H1 (cell line): ENCODE measurements at regions of chr1 and their contacts with region 1.

Region 1: DNA sequence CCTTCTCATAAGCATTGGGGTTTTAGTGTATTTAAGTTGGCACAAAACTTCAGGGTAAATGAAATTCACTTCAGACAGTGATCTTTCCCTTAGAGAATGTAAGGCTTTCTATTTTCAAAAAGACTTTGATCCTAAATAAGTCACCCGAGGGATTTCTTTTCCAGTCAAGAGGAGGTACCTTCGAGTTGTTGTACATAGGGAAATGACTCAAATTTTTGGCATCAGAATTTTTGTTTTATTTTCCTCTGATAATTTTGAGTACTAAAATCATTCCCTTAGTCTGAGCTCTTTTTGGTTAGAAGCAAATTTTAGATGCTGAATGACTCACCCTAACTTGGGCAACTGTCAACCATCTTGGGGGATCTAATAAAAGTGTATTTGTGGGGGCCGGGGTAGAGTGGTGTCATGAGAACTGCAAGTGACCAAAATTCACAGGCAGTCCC is 193.9 kb downstream of the DHRS3 start:
- DNase-seq: no peak
- H3K4me3 ChIP-seq: no peak overlapping the region
- H3K27ac ChIP-seq: no peak overlapping the region
- H3K4me1 ChIP-seq: 0 out of 7 replicates have a peak, but pooled peaks cover 0 to 2% (median 0%) of the 10 kb centered on the region in 4 experiments
- H3K27me3 ChIP-seq: no peaks in the 10 kb centered on the region
- CTCF ChIP-seq: no peak
- EP300 ChIP-seq: no peak
- POLR2A ChIP-seq: no peak
- RAD21 ChIP-seq: no peak

Region 2: GRCh38 chr1:12407050-12407961 is 16.8 kb before region 1 on chr1:
- CTCF ChIA-PET with region 1: interaction called, 13 read pairs
- POLR2A ChIA-PET with region 1: no interaction called
- DNase-seq: no peak
- H3K4me3 ChIP-seq: no peak overlapping the region
- H3K27ac ChIP-seq: no peak overlapping the region
- H3K4me1 ChIP-seq: no peaks in the 10 kb centered on the region
- H3K27me3 ChIP-seq: no peaks in the 10 kb centered on the region
- CTCF ChIP-seq: no peak
- EP300 ChIP-seq: no peak
- POLR2A ChIP-seq: no peak
- RAD21 ChIP-seq: 0 out of 4 replicates have a peak, but pooled peaks have one; percentile 20 to 24

Region 3: DNA sequence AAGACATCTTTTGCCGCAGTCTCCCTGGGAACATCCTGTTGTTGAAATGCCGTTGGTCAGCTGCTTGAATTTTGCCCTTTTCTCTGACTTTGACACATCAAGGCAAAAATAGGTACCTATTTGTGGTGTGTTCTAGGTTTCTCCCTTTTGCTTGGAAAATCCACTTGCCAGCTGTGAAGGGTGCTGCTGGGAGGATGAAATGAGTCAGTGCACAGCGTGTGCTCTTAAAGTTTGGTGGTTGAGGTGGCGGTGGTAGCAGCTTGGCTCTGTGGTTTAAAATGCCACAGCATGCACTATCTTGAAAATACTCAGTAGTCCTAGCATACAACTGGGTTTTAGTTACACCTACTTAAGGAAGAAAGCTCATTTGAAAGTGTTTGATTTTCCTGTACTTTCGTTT is 10.1 kb after region 1 on chr1:
- CTCF ChIA-PET with region 1: interaction called, 13 read pairs
- POLR2A ChIA-PET with region 1: no interaction called
- DNase-seq: no peak
- H3K4me3 ChIP-seq: no peak overlapping the region
- H3K27ac ChIP-seq: no peak overlapping the region
- H3K4me1 ChIP-seq: peaks cover 3 to 5% (median 3%) of the 10 kb centered on the region in 4 experiments; a peak in 4 of 7 replicates
- H3K27me3 ChIP-seq: no peaks in the 10 kb centered on the region
- CTCF ChIP-seq: no peak
- EP300 ChIP-seq: no peak
- POLR2A ChIP-seq: no peak
- RAD21 ChIP-seq: no peak

Region 4: GRCh38 chr1:12454406-12455391 is 30.6 kb after region 1 on chr1:
- CTCF ChIA-PET with region 1: no interaction called
- POLR2A ChIA-PET with region 1: no interaction called
- DNase-seq: no peak
- H3K4me3 ChIP-seq: no peak overlapping the region
- H3K27ac ChIP-seq: no peak overlapping the region
- H3K4me1 ChIP-seq: no peaks in the 10 kb centered on the region; a peak in 2 of 7 replicates
- H3K27me3 ChIP-seq: no peaks in the 10 kb centered on the region
- CTCF ChIP-seq: no peak
- EP300 ChIP-seq: no peak
- POLR2A ChIP-seq: no peak
- RAD21 ChIP-seq: no peak